IMR-90 (cell line): ENCODE measurements at regions of chr4 and their contacts with region 1.

Region 1: DNA sequence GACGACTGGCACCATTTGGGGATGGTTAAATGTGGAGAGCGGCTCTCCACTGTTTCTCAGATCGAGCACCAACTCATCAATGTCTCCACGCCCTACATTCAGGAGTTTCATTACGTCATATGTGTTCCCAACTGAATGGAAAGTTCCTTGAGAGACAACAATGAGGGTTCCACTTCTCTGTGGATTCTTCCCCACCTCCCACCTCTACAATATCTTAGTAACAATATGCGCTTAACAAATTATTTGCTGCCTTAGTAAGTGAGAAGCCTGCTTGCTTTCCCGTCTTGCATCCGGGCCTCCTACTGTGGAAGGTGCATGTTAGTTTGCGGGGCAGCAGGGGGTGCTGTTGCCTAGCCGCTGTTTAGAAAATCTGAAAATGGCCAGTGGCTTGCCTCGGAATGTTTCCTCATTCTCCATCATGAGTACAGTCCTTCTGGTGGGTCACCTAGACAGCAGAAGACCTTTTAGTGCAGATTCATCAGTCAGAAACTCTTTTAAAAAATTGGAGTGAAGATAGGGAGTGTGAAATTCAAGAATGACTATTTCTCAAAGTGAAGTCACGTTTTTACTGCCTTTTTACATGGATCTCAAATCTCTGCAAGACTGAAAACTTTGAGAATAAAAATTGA is 55.7 kb downstream of the PHOX2B start:
- DNase-seq: peak; percentile 59
- ATAC-seq: peak; percentile 95
- H3K4me3 ChIP-seq: no peak overlapping the region
- H3K27ac ChIP-seq: no peak overlapping the region
- H3K4me1 ChIP-seq: no peaks in the 10 kb centered on the region
- H3K27me3 ChIP-seq: peaks cover 10% of the 10 kb centered on the region
- CTCF ChIP-seq: peak; percentile 97
- POLR2A ChIP-seq: no peak
- RAD21 ChIP-seq: peak; percentile 97

Region 2: DNA sequence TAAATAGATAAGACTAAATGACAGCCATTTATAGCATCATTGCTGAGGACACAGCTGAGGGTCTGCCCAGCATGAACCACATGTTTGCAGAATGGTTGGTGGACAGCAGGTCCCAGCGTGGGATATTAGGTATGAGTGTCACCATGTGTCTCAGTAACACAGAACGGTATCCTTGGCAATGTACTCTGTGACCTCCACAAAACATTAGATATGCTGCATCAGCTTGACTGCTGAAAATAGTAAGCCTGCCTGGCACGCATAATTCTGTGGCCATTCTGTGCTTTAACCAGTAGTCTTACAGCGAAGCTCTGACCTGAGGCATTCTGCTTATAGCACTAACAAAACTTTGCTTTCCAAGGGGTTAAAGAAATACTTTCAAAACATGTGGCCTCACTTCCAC is 122.9 kb before region 1 on chr4:
- CTCF ChIA-PET with region 1: no interaction called
- POLR2A ChIA-PET with region 1: no interaction called
- dilution Hi-C with region 1: no loop called
- in situ Hi-C with region 1: no loop called
- intact Hi-C with region 1: no loop called
- DNase-seq: no peak
- ATAC-seq: no peak
- H3K4me3 ChIP-seq: no peak overlapping the region
- H3K27ac ChIP-seq: no peak overlapping the region
- H3K4me1 ChIP-seq: no peaks in the 10 kb centered on the region
- H3K27me3 ChIP-seq: no peaks in the 10 kb centered on the region; the same call in 1 of the 2 replicates
- CTCF ChIP-seq: no peak
- POLR2A ChIP-seq: no peak
- RAD21 ChIP-seq: no peak

Region 3: GRCh38 chr4:41751449-41752061 is 58.7 kb after region 1 on chr4:
- CTCF ChIA-PET with region 1: no interaction called
- POLR2A ChIA-PET with region 1: no interaction called
- dilution Hi-C with region 1: no loop called
- in situ Hi-C with region 1: no loop called
- intact Hi-C with region 1: loop called (anchors 1 kb)
- DNase-seq: no peak
- ATAC-seq: peak; percentile 48; the same call in 1 of the 2 replicates
- H3K4me3 ChIP-seq: no peak overlapping the region
- H3K27ac ChIP-seq: no peak overlapping the region
- H3K4me1 ChIP-seq: no peaks in the 10 kb centered on the region
- H3K27me3 ChIP-seq: peaks cover 91% of the 10 kb centered on the region
- CTCF ChIP-seq: peak; percentile 37
- POLR2A ChIP-seq: no peak
- RAD21 ChIP-seq: peak; percentile 27; the same call in 1 of the 2 replicates

Region 4: GRCh38 chr4:41814565-41814964 is 121.7 kb after region 1 on chr4:
- CTCF ChIA-PET with region 1: interaction called, 4 read pairs
- POLR2A ChIA-PET with region 1: no interaction called
- dilution Hi-C with region 1: no loop called
- in situ Hi-C with region 1: no loop called
- intact Hi-C with region 1: loop called (anchors 1 kb)
- DNase-seq: peak; percentile 21
- ATAC-seq: peak; percentile 59
- H3K4me3 ChIP-seq: no peak overlapping the region
- H3K27ac ChIP-seq: no peak overlapping the region
- H3K4me1 ChIP-seq: no peaks in the 10 kb centered on the region
- H3K27me3 ChIP-seq: peaks cover 11% of the 10 kb centered on the region
- CTCF ChIP-seq: peak; percentile 46
- POLR2A ChIP-seq: no peak
- RAD21 ChIP-seq: peak; percentile 48

Region 5: DNA sequence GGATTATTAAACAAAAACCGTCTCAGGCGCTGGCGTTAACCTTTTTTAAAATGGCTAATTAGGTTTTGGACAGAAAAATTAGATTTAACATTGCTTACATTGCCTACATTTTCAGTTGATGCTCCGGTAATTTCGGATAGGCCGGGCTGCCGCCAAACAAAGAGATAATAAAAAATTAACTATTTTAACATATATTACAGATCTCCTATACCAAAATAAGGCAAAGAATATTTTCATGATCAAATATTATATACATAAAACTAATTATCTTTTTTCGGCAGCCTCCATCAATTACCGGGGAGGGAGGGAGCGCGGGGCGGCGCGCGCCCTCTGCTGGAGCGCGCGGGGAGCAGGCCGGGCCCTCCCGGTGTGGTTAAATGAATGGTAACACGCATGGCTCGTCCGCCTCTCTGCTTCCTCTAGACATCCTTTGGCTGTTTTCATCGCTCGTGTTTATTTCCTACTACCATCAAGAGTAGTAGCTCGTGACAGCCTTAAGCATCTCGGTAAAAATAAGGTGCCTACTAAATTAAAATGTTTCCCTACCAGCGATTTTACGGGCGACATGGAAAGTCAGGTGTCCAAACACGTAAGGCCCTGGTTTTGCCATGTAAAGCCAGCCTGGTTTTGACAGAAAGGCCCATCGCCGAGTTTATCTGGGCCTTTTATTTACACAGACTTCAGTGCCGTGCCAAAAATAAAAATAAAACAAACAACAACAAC is 190.0 kb after region 1 on chr4:
- CTCF ChIA-PET with region 1: interaction called, 22 read pairs
- POLR2A ChIA-PET with region 1: no interaction called
- dilution Hi-C with region 1: no loop called
- in situ Hi-C with region 1: loop called (anchors 5 kb)
- intact Hi-C with region 1: loop called (anchors 1 kb)
- DNase-seq: peak; percentile 23
- ATAC-seq: peak; percentile 88
- H3K4me3 ChIP-seq: no peak overlapping the region
- H3K27ac ChIP-seq: no peak overlapping the region
- H3K4me1 ChIP-seq: no peaks in the 10 kb centered on the region
- H3K27me3 ChIP-seq: peaks cover 76% of the 10 kb centered on the region
- CTCF ChIP-seq: peak; percentile 81
- POLR2A ChIP-seq: no peak
- RAD21 ChIP-seq: peak; percentile 67

Region 6: GRCh38 chr4:41887821-41888686 is 195.2 kb after region 1 on chr4:
- CTCF ChIA-PET with region 1: interaction called, 22 read pairs
- POLR2A ChIA-PET with region 1: no interaction called
- dilution Hi-C with region 1: no loop called
- in situ Hi-C with region 1: loop called (anchors 5 kb)
- intact Hi-C with region 1: loop called (anchors 1 kb)
- DNase-seq: peak; percentile 64
- ATAC-seq: no peak
- H3K4me3 ChIP-seq: no peak overlapping the region
- H3K27ac ChIP-seq: no peak overlapping the region
- H3K4me1 ChIP-seq: no peaks in the 10 kb centered on the region
- H3K27me3 ChIP-seq: peaks cover 37% of the 10 kb centered on the region
- CTCF ChIP-seq: peak; percentile 86
- POLR2A ChIP-seq: no peak
- RAD21 ChIP-seq: peak; percentile 68

Region 7: DNA sequence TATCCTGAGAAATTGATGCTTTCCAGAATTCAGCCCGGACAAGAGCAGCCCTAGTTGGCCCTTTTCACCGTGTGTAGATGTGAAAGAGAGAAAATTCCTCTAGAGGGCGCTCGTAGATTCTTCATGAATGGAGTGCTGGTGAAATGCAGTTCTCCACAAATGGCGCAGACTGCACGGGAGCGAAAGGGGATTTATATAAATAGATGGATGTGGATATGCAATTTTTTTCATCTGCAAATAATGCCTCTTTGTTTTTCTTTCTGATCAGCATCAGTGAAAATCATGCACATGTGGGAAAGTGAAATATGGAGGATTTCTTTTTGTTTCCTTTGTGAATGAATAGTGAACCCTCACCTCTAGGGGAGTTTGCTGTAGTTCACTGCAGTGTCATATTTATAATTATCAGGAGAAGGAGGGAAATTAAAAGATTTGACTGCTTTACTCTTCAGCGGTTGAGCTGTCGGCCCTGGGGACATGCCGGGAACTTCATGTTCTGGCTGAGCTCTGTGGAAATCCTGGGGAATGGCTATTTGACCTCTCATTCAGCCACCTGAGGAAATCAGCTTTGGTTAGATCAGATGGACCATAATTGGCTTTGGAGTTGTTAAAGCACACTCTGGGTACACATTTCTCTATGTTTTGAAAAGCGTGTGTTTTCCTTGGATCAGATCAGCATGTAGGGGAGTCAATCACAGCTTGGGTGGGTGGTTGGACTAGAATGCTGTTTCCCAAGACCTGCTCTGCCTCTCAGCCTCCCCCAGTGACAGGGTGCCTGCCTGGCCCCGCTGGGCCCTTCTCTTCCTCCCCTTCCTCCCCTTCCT is 589.5 kb after region 1 on chr4:
- CTCF ChIA-PET with region 1: no interaction called
- POLR2A ChIA-PET with region 1: no interaction called
- dilution Hi-C with region 1: no loop called
- in situ Hi-C with region 1: no loop called
- intact Hi-C with region 1: loop called (anchors 10 kb)
- DNase-seq: peak; percentile 68
- ATAC-seq: peak; percentile 95
- H3K4me3 ChIP-seq: no peak overlapping the region
- H3K27ac ChIP-seq: peak overlapping the region; percentile 4; the same call in 1 of the 2 replicates
- H3K4me1 ChIP-seq: no peaks in the 10 kb centered on the region; the same call in 1 of the 2 replicates
- H3K27me3 ChIP-seq: no peaks in the 10 kb centered on the region
- CTCF ChIP-seq: peak; percentile 75
- POLR2A ChIP-seq: no peak
- RAD21 ChIP-seq: peak; percentile 74

Region 8: DNA sequence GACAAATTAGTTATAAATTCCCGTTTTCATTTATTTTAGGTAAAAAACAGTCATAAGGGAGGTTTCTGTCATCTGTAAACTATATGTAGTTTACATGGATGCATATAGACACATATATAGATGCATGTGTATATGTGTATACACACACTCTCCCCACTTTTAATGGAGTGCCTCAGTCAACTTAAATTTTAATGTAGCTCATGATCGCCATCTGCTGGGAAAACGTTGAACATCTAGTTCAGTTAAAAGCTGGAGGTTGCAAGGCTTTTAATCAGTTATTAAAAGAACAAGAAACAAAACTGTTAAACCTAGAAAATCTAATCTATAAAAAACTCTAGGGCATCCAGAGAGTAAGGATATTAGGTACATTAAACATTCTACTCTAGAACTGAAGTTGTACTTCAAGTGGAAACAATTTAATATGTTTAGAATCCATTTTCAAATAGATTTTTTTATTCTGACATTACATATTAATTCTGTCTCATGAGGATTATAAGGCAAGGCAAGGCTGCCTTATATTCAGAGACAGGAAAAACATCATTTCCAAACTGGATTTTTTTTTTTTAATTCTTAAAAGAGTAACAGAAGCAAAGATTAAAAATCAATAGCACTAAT is 827.1 kb after region 1 on chr4:
- CTCF ChIA-PET with region 1: no interaction called
- POLR2A ChIA-PET with region 1: no interaction called
- dilution Hi-C with region 1: no loop called
- in situ Hi-C with region 1: no loop called
- intact Hi-C with region 1: loop called (anchors 1 kb)
- DNase-seq: peak; percentile 48
- ATAC-seq: peak; percentile 85
- H3K4me3 ChIP-seq: no peak overlapping the region
- H3K27ac ChIP-seq: no peak overlapping the region
- H3K4me1 ChIP-seq: no peaks in the 10 kb centered on the region
- H3K27me3 ChIP-seq: no peaks in the 10 kb centered on the region; the same call in 1 of the 2 replicates
- CTCF ChIP-seq: peak; percentile 66
- POLR2A ChIP-seq: no peak
- RAD21 ChIP-seq: peak; percentile 69